ENCODE measurements at regions of chr6 and their contacts with region 1.

Region 1: GRCh38 chr6:167047554-167047953 is 48.4 kb downstream of the CEP43 start:
- H3K4me3 Mint-ChIP-seq: no peak overlapping the region
- H3K27ac Mint-ChIP-seq: peak overlapping the region; percentile 87
- H3K4me1 Mint-ChIP-seq: peaks cover 34% of the 10 kb centered on the region
- H3K27me3 Mint-ChIP-seq: no peaks in the 10 kb centered on the region

Region 2: DNA sequence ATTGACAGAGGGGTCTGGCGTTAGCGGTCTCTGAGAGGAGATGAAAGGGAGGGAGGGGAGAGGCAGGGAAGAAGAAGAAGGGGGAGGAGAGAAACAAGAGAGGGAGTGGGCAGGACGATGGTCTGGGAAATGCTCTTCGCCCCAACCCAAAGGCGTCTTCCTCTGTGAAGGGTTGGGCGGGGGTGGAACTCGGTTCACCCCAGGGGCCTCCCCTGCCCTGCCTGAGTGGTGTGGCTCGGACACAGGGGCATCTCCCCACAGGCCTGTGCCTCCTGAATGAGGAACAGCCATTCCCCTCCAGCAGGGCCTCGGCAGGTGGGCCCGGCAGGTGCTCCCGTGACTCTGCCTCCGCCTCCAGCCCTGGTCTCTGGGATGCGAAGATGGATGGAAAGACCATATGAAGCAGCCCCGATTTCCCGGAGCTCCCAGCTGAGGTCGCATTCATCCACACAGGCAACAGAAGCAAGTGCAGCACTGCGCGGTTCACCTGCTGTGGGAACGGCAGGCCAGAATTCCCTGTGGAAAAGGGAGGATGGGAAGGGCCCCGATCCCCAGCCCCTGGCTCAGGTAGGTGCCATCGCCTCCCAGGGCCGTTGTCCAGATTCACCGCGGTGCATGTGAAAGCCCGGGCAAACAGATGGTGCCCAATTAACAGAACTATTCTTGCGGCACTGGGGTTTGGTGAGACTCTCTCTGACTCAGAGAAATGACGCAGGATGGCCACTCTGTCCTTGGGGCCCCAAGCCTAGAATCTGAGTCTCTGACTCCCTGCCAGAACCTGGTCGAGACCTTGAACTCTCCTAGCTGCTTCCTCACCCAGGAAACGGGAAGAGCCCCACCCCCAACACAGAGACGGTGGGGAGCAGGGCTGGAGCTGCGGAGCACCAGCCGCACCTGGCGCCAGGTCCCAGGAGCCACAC is 391.1 kb before region 1 on chr6:
- intact Hi-C with region 1: no loop called
- H3K4me3 Mint-ChIP-seq: peak overlapping the region; percentile 41
- H3K27ac Mint-ChIP-seq: peak overlapping the region; percentile 42
- H3K4me1 Mint-ChIP-seq: no peaks in the 10 kb centered on the region
- H3K27me3 Mint-ChIP-seq: peaks cover 6% of the 10 kb centered on the region

Region 3: GRCh38 chr6:166999145-166999883 is 48.2 kb before region 1 on chr6 and contains the start of gene CEP43:
- intact Hi-C with region 1: loop called (anchors 5 kb)
- H3K4me3 Mint-ChIP-seq: peak within 1 kb of the TSS; percentile 88
- H3K27ac Mint-ChIP-seq: peak within 1 kb of the TSS; percentile 76
- H3K4me1 Mint-ChIP-seq: peaks cover 32% of the 10 kb centered on the region
- H3K27me3 Mint-ChIP-seq: no peaks in the 10 kb centered on the region

Region 4: DNA sequence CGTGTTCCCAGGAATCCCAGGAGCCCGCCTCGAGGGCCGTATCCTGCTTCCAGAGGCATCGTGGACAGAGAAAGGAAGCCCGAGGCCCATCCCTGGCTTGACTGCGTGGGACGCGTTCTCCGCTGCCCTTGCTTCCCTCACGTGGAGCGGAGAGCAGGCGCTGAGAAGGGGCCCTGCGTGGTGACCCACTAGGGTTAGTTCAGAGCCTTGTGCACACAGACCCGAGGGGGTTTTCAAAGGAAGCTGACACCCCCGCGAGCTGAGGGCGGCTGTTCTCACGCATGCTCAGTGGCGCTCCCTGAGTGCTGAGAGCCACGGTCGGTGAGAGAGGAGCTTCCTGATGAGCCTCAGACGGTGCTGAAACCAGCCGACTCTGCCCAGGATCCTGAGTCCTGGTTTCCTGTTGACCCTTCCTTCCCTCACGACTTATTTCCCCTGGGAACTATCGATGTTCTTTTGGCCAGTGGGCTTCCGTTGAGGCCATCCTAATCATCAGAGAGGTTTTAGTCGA is 46.4 kb after region 1 on chr6:
- intact Hi-C with region 1: loop called (anchors 2 kb)
- H3K4me3 Mint-ChIP-seq: peak overlapping the region; percentile 23
- H3K27ac Mint-ChIP-seq: peak overlapping the region; percentile 88
- H3K4me1 Mint-ChIP-seq: peaks cover 71% of the 10 kb centered on the region
- H3K27me3 Mint-ChIP-seq: peaks cover 7% of the 10 kb centered on the region

Region 5: GRCh38 chr6:167119670-167120381 is 72.3 kb after region 1 on chr6:
- intact Hi-C with region 1: loop called (anchors 10 kb)
- H3K4me3 Mint-ChIP-seq: no peak overlapping the region
- H3K27ac Mint-ChIP-seq: peak overlapping the region; percentile 74
- H3K4me1 Mint-ChIP-seq: peaks cover 32% of the 10 kb centered on the region
- H3K27me3 Mint-ChIP-seq: peaks cover 10% of the 10 kb centered on the region